Endothelial cell of umbilical vein (primary cell): ENCODE measurements at regions of chr18 and their contacts with region 1.

Region 1: DNA sequence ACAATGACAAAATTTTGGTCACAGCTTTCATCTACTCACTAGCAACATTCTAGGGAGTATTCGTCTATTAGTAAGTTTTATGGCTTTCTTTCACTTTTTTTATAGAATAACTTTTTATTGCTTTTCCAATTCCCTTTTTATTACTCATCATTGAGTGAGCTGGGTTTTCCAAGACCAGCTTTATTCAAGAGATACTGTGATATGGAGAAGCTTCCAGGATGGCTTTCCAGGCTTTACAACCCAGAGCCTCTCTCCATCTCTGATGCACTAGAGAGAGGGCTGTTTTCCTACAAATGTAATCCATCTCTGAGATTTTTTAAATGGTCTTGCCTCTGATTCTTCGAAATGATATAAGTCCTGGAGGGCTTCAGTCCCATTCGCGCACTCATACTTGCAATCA is 118.3 kb downstream of the LDLRAD4 start:
- DNase-seq: no peak
- H3K4me3 ChIP-seq: no peak overlapping the region
- H3K27ac ChIP-seq: no peak overlapping the region
- H3K4me1 ChIP-seq: no peaks in the 10 kb centered on the region
- H3K27me3 ChIP-seq: peaks cover 5% of the 10 kb centered on the region in 2 experiments
- CTCF ChIP-seq: no peak
- POLR2A ChIP-seq: no peak

Region 2: DNA sequence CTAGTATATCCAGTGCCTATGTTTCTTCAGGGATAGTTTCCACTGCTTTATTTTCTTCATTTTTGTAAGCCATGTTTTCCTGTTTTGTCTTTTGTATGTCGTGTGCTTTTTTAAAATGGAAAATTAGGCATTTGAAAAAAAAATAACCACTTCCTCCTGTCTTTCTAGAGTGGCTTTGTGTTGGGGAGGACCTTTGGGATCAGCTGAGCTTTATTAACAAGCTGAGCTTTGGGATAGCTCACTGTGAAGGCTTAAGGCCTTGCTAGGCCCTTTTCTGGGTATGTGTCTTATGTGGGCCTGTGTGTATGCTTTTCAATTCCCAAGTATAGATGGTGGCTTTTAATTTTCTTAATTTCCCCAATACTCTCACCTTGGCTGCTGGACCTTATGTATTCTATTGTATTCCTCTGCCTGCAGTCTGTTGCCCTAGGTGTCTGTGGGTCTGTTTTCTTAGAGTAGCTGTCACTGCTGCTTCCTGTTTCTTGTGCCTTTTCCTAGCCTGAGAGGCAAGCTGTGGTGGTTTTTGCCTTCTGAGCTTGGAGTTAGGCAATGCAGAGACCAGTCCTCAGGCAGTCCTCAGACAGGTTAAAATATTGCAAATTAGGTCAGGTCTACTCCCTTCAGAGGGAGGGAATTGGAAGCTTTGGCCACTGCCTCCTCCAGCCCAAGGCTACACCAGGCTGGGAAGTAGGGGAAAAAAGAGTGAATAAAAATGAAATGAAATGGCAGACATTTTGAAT is 16.4 kb after region 1 on chr18:
- CTCF ChIA-PET with region 1: no interaction called
- POLR2A ChIA-PET with region 1: no interaction called
- dilution Hi-C with region 1: no loop called
- intact Hi-C with region 1: no loop called
- DNase-seq: peak; percentile 13
- H3K4me3 ChIP-seq: no peak overlapping the region
- H3K27ac ChIP-seq: no peak overlapping the region
- H3K4me1 ChIP-seq: no peaks in the 10 kb centered on the region
- H3K27me3 ChIP-seq: no peaks in the 10 kb centered on the region
- CTCF ChIP-seq: no peak
- POLR2A ChIP-seq: no peak

Region 3: GRCh38 chr18:13425462-13426133 is 88.8 kb after region 1 on chr18:
- CTCF ChIA-PET with region 1: no interaction called
- POLR2A ChIA-PET with region 1: no interaction called
- dilution Hi-C with region 1: no loop called
- intact Hi-C with region 1: loop called (anchors 10 kb)
- DNase-seq: no peak
- H3K4me3 ChIP-seq: no peak overlapping the region
- H3K27ac ChIP-seq: no peak overlapping the region
- H3K4me1 ChIP-seq: peaks cover 3% of the 10 kb centered on the region
- H3K27me3 ChIP-seq: no peaks in the 10 kb centered on the region
- CTCF ChIP-seq: no peak
- POLR2A ChIP-seq: no peak